WTC11 (cell line): ENCODE measurements at regions of chr19 and their contacts with region 1.

Region 1: GRCh38 chr19:45340232-45340898 is at the start of gene KLC3:
- DNase-seq: peak; percentile 66
- ATAC-seq: peak; percentile 55
- H3K4me3 Mint-ChIP-seq: peak within 1 kb of the TSS; percentile 63
- H3K27ac Mint-ChIP-seq: no peak within 1 kb of the TSS
- H3K4me1 Mint-ChIP-seq: peaks cover 2% of the 10 kb centered on the region; the same call in 1 of the 2 replicates
- H3K27me3 Mint-ChIP-seq: peaks cover 15% of the 10 kb centered on the region
- CTCF ChIP-seq: no peak
- total RNA-seq, gene KLC3: 5.2 to 6.5 TPM (median 5.3 TPM) in 3 replicates

Region 2: GRCh38 chr19:45250214-45250831 is 90.0 kb before region 1 on chr19:
- CTCF ChIA-PET with region 1: interaction called, 12 read pairs
- POLR2A ChIA-PET with region 1: no interaction called
- DNase-seq: no peak
- ATAC-seq: no peak
- H3K4me3 Mint-ChIP-seq: peak overlapping the region; percentile 89
- H3K27ac Mint-ChIP-seq: no peak overlapping the region
- H3K4me1 Mint-ChIP-seq: peaks cover 22% of the 10 kb centered on the region
- H3K27me3 Mint-ChIP-seq: peaks cover 25% of the 10 kb centered on the region
- CTCF ChIP-seq: no peak

Region 3: GRCh38 chr19:45294291-45295029 is 45.9 kb before region 1 on chr19:
- CTCF ChIA-PET with region 1: no interaction called
- POLR2A ChIA-PET with region 1: no interaction called
- DNase-seq: no peak
- ATAC-seq: no peak
- H3K4me3 Mint-ChIP-seq: no peak overlapping the region
- H3K27ac Mint-ChIP-seq: no peak overlapping the region
- H3K4me1 Mint-ChIP-seq: no peaks in the 10 kb centered on the region
- H3K27me3 Mint-ChIP-seq: peaks cover 7% of the 10 kb centered on the region; the same call in 1 of the 2 replicates
- CTCF ChIP-seq: no peak

Region 4: DNA sequence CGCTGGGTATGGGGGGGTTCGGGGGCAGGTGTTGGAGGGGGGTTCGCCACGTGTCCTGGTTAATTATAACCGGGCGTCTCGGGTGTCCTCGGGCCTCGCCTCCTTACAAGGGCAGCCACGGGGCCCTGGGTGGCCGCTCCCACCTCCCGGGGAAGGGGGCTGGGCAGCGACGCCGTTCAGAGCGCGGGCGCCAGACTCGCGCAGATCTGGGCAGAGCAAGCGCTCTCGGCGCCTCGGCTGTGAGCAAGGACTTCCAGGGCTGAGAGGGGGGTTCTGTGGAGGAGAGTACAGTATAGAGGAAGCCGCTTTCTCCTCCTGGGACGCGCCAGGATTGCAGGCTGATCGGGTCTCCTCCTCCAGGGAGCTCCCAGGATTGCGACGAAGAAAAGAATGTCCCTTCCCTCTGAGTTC is 16.7 kb before region 1 on chr19:
- CTCF ChIA-PET with region 1: interaction called, 12 read pairs
- POLR2A ChIA-PET with region 1: interaction called, 7 read pairs
- DNase-seq: peak; percentile 48
- ATAC-seq: peak; percentile 36
- H3K4me3 Mint-ChIP-seq: peak overlapping the region; percentile 56
- H3K27ac Mint-ChIP-seq: no peak overlapping the region
- H3K4me1 Mint-ChIP-seq: peaks cover 22% of the 10 kb centered on the region
- H3K27me3 Mint-ChIP-seq: peaks cover 20% of the 10 kb centered on the region
- CTCF ChIP-seq: no peak

Region 5: GRCh38 chr19:45368737-45369340 is 28.5 kb after region 1 on chr19:
- CTCF ChIA-PET with region 1: no interaction called
- POLR2A ChIA-PET with region 1: no interaction called
- DNase-seq: peak; percentile 53
- ATAC-seq: no peak; the same call in 1 of the 2 replicates
- H3K4me3 Mint-ChIP-seq: peak overlapping the region; percentile 90
- H3K27ac Mint-ChIP-seq: peak overlapping the region; percentile 59
- H3K4me1 Mint-ChIP-seq: peaks cover 15% of the 10 kb centered on the region
- H3K27me3 Mint-ChIP-seq: no peaks in the 10 kb centered on the region
- CTCF ChIP-seq: no peak